GM10248 (cell line): ENCODE measurements at regions of chr5 and their contacts with region 1.

Region 1: GRCh38 chr5:141564216-141564692 is 54.5 kb downstream of the DIAPH1 start:
- DNase-seq: peak; percentile 68
- CTCF ChIP-seq: peak; percentile 60

Region 2: GRCh38 chr5:141326088-141326854 is 238.0 kb before region 1 on chr5:
- CTCF ChIA-PET with region 1: interaction called, 27 read pairs
- POLR2A ChIA-PET with region 1: no interaction called
- DNase-seq: peak; percentile 62
- CTCF ChIP-seq: peak; percentile 43

Region 3: GRCh38 chr5:141412854-141413539 is 151.3 kb before region 1 on chr5 and contains the start of gene PCDHGA10:
- CTCF ChIA-PET with region 1: interaction called, 180 read pairs
- POLR2A ChIA-PET with region 1: no interaction called
- DNase-seq: peak; percentile 73
- CTCF ChIP-seq: peak; percentile 77

Region 4: DNA sequence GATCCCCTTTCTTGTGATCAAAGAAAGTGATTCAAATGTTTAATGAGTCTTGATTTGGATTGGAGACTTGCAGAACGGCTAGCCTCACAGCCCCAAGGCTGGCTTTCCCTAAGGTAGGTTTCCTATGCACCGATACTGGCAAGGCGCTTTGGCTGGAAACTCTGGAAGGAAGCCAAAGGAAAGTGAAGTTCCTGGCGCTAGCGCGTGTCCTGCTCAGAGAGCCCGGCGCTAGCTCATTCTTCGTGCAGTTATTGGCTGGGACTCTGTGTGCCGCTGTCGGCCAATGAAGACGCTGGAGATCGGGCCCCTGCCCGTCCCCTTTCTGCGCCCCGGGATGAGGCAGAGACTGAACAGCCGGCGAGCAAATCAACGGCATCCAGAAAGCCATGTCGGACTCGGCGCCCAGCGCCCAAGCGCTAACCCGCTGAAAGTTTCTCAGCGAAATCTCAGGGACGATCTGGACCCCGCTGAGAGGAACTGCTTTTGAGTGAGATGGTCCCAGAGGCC is 88.6 kb before region 1 on chr5 and contains the start of gene PCDHGC3:
- CTCF ChIA-PET with region 1: interaction called, 35 read pairs
- POLR2A ChIA-PET with region 1: no interaction called
- DNase-seq: peak; percentile 89
- CTCF ChIP-seq: peak; percentile 75

Region 5: GRCh38 chr5:141524604-141525597 is 39.4 kb before region 1 on chr5:
- CTCF ChIA-PET with region 1: interaction called, 26 read pairs
- POLR2A ChIA-PET with region 1: no interaction called
- DNase-seq: peak; percentile 78
- CTCF ChIP-seq: peak; percentile 99

Region 6: GRCh38 chr5:141590127-141590526 is 25.9 kb after region 1 on chr5:
- CTCF ChIA-PET with region 1: interaction called, 30 read pairs
- POLR2A ChIA-PET with region 1: no interaction called
- DNase-seq: no peak
- CTCF ChIP-seq: no peak

Region 7: DNA sequence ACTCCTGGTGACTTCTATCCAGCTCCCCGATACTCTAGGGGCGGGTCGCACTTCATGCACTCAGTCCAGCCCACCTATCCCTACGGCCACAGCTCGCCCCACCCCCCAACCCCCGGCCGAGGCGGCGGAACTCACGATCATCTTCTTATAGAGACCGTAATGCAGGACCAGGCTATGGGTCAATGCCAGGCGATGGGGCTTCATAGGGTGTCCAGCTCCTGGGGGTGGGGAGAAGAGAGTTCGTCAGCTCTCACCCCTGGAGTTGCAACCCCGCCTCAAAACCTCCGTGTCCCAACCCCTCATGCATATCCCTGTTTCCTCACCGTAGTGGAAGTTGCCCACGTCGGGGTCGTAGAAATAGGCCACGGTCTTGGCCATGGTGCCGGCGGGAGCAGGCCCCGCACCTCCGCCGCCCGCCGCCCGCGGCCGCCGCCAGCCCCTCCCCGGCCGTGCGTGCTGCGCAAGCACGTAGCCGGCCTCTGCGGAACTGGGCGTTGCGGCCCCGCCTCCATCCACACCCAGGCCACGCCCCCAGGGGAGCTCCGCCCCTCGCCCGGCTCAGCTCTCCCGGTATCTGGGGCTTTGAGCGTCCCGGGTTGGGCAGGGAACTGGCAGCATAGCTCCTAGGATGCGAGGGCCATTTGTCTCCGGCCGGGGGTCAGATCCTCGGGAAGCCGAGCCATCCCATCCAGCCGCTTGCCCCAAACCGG is 72.3 kb after region 1 on chr5 and contains the starts of genes HDAC3 and RELL2:
- CTCF ChIA-PET with region 1: interaction called, 12 read pairs
- POLR2A ChIA-PET with region 1: no interaction called
- DNase-seq: peak; percentile 95
- CTCF ChIP-seq: no peak